Right ventricle myocardium superior (tissue), 1 donor: ENCODE measurements at regions of chr9 and their contacts with region 1.

Region 1: GRCh38 chr9:128294142-128294541 is 18.1 kb downstream of the SWI5 start:
- DNase-seq: no peak
- ATAC-seq: no peak

Region 2: DNA sequence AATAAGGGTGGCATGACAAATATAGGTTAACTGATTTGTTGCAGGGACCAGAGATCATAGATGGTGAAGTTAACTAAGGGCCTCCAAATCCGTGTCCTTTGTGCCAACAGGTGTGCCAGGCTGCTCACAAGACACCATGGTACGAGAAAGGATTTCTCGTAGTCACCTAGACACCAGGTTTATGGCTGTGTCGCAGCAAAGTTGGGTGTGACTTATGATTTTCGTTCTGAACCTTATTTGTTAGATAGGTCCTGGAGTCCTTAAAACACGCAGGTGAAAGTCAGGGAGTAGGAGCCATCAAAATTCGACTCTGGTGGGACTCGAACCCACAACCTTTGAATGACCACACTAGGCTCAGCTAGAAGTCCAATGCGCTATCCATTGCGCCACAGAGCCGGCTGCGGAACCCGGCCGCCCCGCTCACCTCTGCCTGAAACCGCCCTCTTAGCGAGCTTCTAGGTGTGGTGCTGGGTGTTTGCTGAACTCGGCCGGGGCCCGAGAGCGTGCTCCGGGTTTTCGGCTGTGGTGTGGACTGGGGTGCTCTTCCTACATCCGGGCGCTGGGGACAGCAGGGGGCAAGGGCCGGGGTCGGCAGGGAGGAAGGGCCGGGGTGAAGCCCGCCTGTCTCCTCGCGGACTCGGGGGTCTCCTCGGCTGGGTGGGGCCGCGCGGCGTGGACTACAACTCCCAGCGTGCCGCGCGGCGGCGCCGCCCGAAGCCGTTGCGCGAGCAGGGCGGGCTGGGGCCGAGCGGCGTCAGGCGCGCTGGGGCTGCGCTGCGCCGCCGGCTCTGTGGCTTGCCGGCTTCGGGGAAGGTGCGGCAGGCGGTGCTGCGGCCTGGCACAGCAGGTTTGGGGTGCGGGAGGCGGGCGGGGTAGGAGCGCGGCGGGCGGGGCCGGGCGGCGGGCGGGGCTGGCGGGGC is 45.9 kb after region 1 on chr9 and contains the start of gene SLC27A4:
- intact Hi-C with region 1: loop called (anchors 2 kb)
- DNase-seq: peak; percentile 84
- ATAC-seq: peak; percentile 95
- total RNA-seq, gene SLC27A4: 19.0 TPM

Region 3: GRCh38 chr9:128528445-128529160 is 234.5 kb after region 1 on chr9:
- intact Hi-C with region 1: no loop called
- DNase-seq: no peak
- ATAC-seq: no peak